ENCODE measurements at regions of chr18 and their contacts with region 1.

Region 1: GRCh38 chr18:45664824-45665763 is 49.8 kb downstream of the SLC14A2 start:
- DNase-seq: peak in 3 of 5 donors; percentile 42 to 52 (median 43)
- ATAC-seq: peak; percentile 43 to 76 (median 68)
- H3K4me3 ChIP-seq: no peak overlapping the region
- H3K27ac ChIP-seq: peak overlapping the region in 2 of 12 donors; percentile 57 to 61
- H3K4me1 ChIP-seq: peaks cover 0 to 34% (median 16%) of the 10 kb centered on the region in 12 donors
- H3K27me3 ChIP-seq: no peaks in the 10 kb centered on the region
- CTCF ChIP-seq: peak; percentile 89 to 95 (median 92)
- POLR2A ChIP-seq: no peak

Region 2: DNA sequence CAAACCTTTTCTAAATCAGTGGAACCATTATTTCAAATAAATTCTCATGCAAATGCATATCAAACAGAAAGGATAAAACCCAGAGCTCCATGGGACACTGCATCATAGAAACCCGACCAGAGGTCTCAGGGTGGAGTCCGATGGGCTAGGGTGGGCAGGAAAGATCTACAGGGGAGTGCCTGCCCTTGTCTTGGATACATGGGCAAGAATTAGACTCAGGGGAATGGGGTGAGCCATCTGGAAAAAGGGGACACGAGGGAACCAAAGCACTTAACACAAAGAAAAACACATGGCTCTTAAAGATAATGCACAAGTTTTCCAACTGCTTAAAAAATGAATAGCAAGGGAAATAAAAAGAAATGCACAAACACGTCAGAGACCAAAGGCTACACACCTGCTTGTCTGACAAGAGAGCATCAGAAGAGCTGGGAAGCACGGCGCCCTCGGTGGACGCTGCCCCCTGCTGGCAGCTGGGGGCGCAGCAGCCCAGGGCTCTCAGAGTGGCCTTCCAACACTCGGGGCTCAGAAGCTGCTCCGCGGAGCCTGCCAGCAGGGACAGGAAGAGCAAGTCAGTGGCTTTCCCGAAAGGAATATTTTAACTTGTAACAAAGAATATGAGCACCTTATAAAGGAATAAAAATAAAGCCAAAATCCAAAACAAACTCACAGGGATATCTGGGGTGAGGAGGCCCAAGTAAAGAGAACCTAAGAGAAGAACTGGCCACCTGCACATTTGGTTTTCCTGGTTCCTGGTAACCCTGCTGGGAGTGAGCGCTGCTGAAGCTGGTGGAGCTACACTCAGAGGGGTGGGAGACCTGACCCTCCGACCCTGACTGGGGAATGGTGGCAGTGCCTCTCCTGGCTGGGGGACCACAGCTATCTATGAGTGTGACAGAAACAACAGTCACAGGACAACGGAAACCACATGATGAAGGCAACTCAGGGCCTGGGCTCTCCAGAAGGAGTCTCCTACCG is 214.9 kb after region 1 on chr18:
- intact Hi-C with region 1: loop called in 3 of 10 experiments (anchors 1 to 5 kb)
- DNase-seq: peak; percentile 64 to 87 (median 68)
- ATAC-seq: peak; percentile 81 to 95 (median 92)
- H3K4me3 ChIP-seq: no peak overlapping the region
- H3K27ac ChIP-seq: no peak overlapping the region
- H3K4me1 ChIP-seq: peaks cover 0 to 6% (median 2%) of the 10 kb centered on the region in 12 donors
- H3K27me3 ChIP-seq: no peaks in the 10 kb centered on the region
- CTCF ChIP-seq: peak; percentile 98 to 100 (median 99)
- POLR2A ChIP-seq: no peak

Region 3: GRCh38 chr18:45967007-45967706 is 302.1 kb after region 1 on chr18 and contains the start of gene EPG5:
- intact Hi-C with region 1: loop called in 7 of 10 experiments (anchors 5 to 10 kb)
- DNase-seq: peak; percentile 95 to 97 (median 96)
- ATAC-seq: peak; percentile 99 to 100 (median 100)
- H3K4me3 ChIP-seq: peak within 1 kb of the TSS; percentile 52 to 96 (median 80)
- H3K27ac ChIP-seq: peak within 1 kb of the TSS in 11 of 12 donors; percentile 32 to 80 (median 66)
- H3K4me1 ChIP-seq: peaks cover 0 to 40% (median 16%) of the 10 kb centered on the region in 12 donors
- H3K27me3 ChIP-seq: no peaks in the 10 kb centered on the region
- CTCF ChIP-seq: no peak
- POLR2A ChIP-seq: peak in 1 of 2 donors; percentile 61
- total RNA-seq, gene EPG5: 14.4 to 37.8 (median 23.8) TPM

Region 4: GRCh38 chr18:45974088-45974536 is 309.0 kb after region 1 on chr18:
- intact Hi-C with region 1: loop called in 8 of 10 experiments (anchors 2 to 10 kb)
- DNase-seq: peak in 4 of 5 donors; percentile 27 to 48 (median 41)
- ATAC-seq: peak; percentile 63 to 87 (median 78)
- H3K4me3 ChIP-seq: no peak overlapping the region
- H3K27ac ChIP-seq: peak overlapping the region in 1 of 12 donors; percentile 32
- H3K4me1 ChIP-seq: peaks cover 0 to 6% (median 0%) of the 10 kb centered on the region in 12 donors
- H3K27me3 ChIP-seq: no peaks in the 10 kb centered on the region
- CTCF ChIP-seq: peak; percentile 54 to 78 (median 66)
- POLR2A ChIP-seq: no peak

Measured in heart left ventricle (tissue), 16 donors.